Dorsolateral prefrontal cortex (tissue), 120 donors: ENCODE measurements at regions of chr4 and their contacts with region 1.

Region 1: DNA sequence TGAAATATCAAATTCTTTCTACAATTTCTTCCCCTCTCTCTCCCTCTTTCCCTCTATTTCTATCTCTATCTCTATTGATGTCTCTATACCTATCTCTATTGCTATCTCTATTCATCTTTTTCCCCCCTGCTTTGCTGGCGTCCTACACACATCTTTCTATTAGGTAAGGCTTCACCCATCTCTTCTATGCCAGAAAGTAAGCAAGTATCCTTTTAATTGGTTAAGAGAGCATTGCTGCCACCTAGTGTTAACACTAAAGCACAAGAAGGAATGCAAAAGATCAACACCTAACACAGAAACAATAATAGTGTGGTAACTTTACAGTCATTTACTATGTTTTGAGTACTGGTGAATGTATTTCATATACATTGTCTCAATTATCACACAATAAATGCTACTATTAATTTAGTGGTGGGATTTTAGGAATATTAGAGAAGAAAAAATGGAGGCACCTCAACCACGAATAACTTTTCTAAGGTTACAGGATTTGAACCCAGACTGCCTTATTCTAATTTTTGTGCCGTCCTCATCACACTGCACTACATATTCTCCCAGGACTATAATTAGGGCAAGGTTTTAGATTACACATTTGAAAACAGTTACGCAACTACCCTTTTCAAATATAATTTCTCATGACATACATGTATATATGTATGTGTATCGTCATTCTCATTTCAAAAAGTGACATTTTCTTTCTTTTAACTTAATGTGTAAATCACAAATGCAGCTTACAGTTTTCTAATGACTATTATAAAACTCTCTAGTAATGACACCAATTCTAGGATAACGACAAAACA is 3.7 kb upstream of the C4orf36 start:
- DNase-seq: peak in 1 of 10 donors; percentile 17
- H3K4me3 ChIP-seq: no peak overlapping the region
- H3K27ac ChIP-seq: no peak overlapping the region
- H3K27me3 ChIP-seq: no peaks in the 10 kb centered on the region
- CTCF ChIP-seq: peak; percentile 49 to 94 (median 85)

Region 2: DNA sequence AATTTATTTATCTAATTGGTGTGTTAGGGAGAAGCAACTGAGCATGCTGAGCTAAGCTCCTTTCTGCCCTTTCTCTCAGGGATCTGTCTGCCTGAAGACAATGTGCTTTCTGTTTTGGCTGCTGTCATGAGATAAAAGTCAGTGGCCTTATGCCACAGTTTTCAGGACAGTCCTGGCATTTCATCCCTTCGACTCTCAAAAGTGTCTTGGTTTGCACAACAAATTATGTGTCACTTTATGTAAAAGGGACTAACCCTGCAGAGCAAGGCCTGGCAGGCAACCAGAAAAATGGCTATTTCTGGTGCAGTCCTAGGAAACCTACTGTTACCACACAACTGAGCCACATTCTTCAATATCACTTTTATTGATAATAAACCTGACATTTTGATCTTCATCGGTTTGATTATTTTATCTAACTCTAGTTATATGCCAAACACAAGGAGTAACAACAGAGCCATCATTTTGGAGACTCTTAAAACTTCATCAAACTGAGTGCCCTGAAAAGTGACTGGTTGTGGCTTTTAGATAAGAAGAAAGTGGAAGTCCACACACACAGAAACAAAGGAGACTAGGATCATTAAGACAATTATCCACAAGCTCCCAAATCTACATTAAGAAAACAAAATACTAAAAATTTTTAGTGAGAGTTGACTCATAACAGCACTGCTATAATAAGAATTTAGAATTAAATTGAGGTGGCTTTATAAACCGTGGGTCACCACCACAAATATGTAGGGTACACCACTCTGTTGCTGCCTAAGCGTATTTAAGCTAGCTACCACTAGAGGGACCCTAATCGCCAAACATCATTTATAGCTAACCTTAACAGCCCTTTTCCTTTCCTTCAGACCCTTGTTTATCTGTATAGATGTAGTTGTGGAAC is 397.7 kb before region 1 on chr4:
- intact Hi-C with region 1: loop called (anchors 1 to 2 kb)
- DNase-seq: peak in 2 of 10 donors; percentile 7 to 10
- H3K4me3 ChIP-seq: peak overlapping the region in 19 of 59 donors; percentile 0 to 44 (median 17)
- H3K27ac ChIP-seq: peak overlapping the region in 49 of 59 donors; percentile 1 to 85 (median 62)
- H3K27me3 ChIP-seq: no peaks in the 10 kb centered on the region
- CTCF ChIP-seq: peak; percentile 59 to 91 (median 82)

Region 3: GRCh38 chr4:86522349-86522748 is 373.5 kb before region 1 on chr4:
- intact Hi-C with region 1: loop called in 1 of 2 experiments (anchors 10 kb)
- DNase-seq: no peak
- H3K4me3 ChIP-seq: no peak overlapping the region
- H3K27ac ChIP-seq: no peak overlapping the region
- H3K27me3 ChIP-seq: no peaks in the 10 kb centered on the region
- CTCF ChIP-seq: peak in 52 of 56 donors; percentile 16 to 65 (median 44)

Region 4: GRCh38 chr4:86593688-86594558 is 302.0 kb before region 1 on chr4 and contains the start of gene PTPN13:
- intact Hi-C with region 1: loop called (anchors 5 kb)
- DNase-seq: peak; percentile 70 to 100 (median 99)
- H3K4me3 ChIP-seq: peak within 1 kb of the TSS; percentile 51 to 93 (median 82)
- H3K27ac ChIP-seq: peak within 1 kb of the TSS; percentile 44 to 96 (median 90)
- H3K27me3 ChIP-seq: no peaks in the 10 kb centered on the region
- CTCF ChIP-seq: peak in 26 of 56 donors; percentile 0 to 59 (median 22)
- total RNA-seq, gene PTPN13: 25.4 to 145 (median 48.0) TPM